ENCODE measurements at regions of chr11 and their contacts with region 1.

Region 1: DNA sequence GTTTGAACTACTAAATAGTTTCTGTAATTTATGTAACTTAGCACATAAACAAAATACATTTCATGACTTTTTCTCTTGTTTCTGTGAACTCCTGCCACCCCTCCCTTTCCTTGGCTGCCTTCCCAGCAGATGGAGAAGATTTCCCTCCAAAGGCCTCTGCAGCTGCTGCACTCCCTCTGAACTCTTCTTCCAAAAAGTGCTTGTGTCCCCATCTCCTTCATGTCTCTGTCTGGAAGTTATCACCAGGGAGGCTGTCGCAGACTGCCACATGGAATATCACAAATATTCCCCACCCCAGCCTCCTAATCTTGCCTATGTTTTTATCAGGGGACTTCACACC is 1068.3 kb downstream of the OPCML start:
- DNase-seq: no peak
- ATAC-seq: no peak
- H3K4me3 ChIP-seq: no peak overlapping the region
- H3K27ac ChIP-seq: no peak overlapping the region
- H3K4me1 ChIP-seq: no peaks in the 10 kb centered on the region
- H3K27me3 ChIP-seq: no peaks in the 10 kb centered on the region

Region 2: DNA sequence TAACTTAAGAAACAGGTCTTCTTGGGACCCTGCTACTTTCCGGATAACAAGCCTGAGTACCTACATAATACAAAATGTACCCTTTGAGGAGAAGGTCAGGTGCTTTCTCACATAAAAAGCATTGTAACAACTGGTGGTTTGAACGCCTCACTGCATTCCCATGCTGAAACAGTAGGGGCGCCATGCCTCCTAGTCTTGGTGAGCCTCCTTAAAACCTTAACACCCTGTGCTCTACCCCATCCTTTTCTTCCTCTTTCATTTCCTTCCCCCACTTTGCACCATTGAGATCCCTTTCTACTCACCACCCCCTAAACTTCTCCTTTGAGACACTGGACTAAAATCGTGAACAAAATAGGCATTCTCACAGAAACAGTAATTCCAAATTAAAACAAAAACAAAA is 364.3 kb before region 1 on chr11:
- intact Hi-C with region 1: no loop called
- DNase-seq: peak in 1 of 2 donors; percentile 56
- ATAC-seq: no peak
- H3K4me3 ChIP-seq: no peak overlapping the region
- H3K27ac ChIP-seq: no peak overlapping the region
- H3K4me1 ChIP-seq: no peaks in the 10 kb centered on the region
- H3K27me3 ChIP-seq: peaks cover 0 to 2% of the 10 kb centered on the region in 2 donors

Region 3: GRCh38 chr11:132409573-132410355 is 54.2 kb before region 1 on chr11:
- intact Hi-C with region 1: loop called in 1 of 2 experiments (anchors 5 kb)
- DNase-seq: no peak
- ATAC-seq: no peak
- H3K4me3 ChIP-seq: no peak overlapping the region
- H3K27ac ChIP-seq: no peak overlapping the region
- H3K4me1 ChIP-seq: no peaks in the 10 kb centered on the region
- H3K27me3 ChIP-seq: no peaks in the 10 kb centered on the region